Activated CD4-positive, alpha-beta T cell treated with anti-CD3 and anti-CD28 coated beads for 36 hours (primary cell): ENCODE measurements at regions of chr9 and their contacts with region 1.

Region 1: GRCh38 chr9:33239921-33240320 is at the start of gene SPINK4:
- DNase-seq: no peak
- ATAC-seq: no peak
- H3K4me3 Mint-ChIP-seq: no peak within 1 kb of the TSS
- H3K27ac Mint-ChIP-seq: no peak within 1 kb of the TSS
- H3K4me1 Mint-ChIP-seq: peaks cover 5% of the 10 kb centered on the region
- H3K27me3 Mint-ChIP-seq: peaks cover 3% of the 10 kb centered on the region
- total RNA-seq, gene SPINK4: not detected

Region 2: GRCh38 chr9:31359071-31359470 is 1880.8 kb before region 1 on chr9:
- CTCF ChIA-PET with region 1: no interaction called
- POLR2A ChIA-PET with region 1: no interaction called
- intact Hi-C with region 1: no loop called
- DNase-seq: no peak
- ATAC-seq: no peak
- H3K4me3 Mint-ChIP-seq: no peak overlapping the region
- H3K27ac Mint-ChIP-seq: no peak overlapping the region
- H3K4me1 Mint-ChIP-seq: no peaks in the 10 kb centered on the region
- H3K27me3 Mint-ChIP-seq: no peaks in the 10 kb centered on the region

Region 3: DNA sequence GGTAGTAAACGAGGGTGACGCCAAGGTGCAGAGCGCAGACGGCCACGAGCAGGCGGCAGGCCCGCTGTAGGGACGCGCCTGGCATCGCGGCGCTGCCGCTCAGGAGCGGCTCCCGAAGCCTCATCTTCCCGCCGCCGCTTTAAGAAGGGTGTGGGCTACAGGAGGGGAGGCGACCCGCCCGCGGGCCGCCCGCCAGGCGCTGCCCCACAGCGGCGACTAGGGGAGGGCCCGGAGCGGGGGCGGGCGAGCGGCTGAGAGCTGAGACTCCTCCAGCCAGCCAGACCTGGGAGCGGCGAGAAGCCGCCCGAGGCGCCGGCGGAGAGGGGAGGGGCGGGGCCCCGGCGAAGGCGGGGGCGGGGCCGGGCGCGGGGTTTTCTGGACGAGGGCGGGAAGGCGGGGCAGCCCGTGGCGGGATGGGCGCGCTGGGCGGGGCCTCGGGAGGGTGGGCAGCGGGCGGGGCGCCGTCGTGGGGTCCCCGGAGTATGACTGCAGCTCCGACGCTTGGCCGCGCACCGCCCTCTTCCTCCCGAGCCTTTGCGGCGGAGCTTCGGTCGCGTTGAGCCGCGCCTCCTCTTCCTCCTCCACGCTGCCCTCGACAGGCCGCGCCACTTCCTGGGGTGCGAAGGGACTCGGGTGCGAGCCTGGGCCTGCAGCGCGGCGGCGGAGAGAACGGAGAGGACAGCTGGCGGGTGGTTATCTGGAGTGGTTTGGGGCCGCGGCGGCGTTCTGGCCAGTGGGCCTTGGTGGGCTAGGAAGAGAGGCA is 72.7 kb before region 1 on chr9 and contains the start of gene B4GALT1:
- CTCF ChIA-PET with region 1: no interaction called
- POLR2A ChIA-PET with region 1: no interaction called
- intact Hi-C with region 1: no loop called
- DNase-seq: peak; percentile 99
- ATAC-seq: peak; percentile 83
- H3K4me3 Mint-ChIP-seq: peak within 1 kb of the TSS; percentile 95
- H3K27ac Mint-ChIP-seq: peak within 1 kb of the TSS; percentile 97
- H3K4me1 Mint-ChIP-seq: peaks cover 50% of the 10 kb centered on the region
- H3K27me3 Mint-ChIP-seq: no peaks in the 10 kb centered on the region
- total RNA-seq, gene B4GALT1: 44.5 to 47.1 TPM

Region 4: DNA sequence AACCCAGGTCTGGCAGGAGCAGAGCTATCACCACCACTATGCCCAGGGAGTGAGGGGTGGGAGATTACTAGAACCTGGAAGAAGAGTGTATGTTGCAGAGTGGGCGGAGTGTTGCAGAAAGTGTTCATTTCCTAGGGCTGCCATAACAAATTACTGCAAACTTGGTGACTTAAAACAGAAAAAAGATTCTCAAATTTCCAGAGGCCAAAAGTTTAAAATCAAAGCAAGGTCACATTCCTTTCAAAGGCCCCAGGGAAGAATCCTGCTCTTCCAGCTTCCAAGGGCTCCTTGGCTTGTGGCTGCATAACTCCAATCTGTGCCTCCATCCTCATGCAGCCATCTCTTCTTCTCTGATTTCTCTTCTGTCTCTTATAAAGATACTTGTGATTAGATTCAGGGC is 30.5 kb before region 1 on chr9:
- CTCF ChIA-PET with region 1: no interaction called
- POLR2A ChIA-PET with region 1: no interaction called
- intact Hi-C with region 1: loop called in 1 of 2 experiments (anchors 5 kb)
- DNase-seq: no peak
- ATAC-seq: no peak
- H3K4me3 Mint-ChIP-seq: no peak overlapping the region
- H3K27ac Mint-ChIP-seq: peak overlapping the region; percentile 55
- H3K4me1 Mint-ChIP-seq: peaks cover 2% of the 10 kb centered on the region
- H3K27me3 Mint-ChIP-seq: no peaks in the 10 kb centered on the region